GM13977 (cell line): ENCODE measurements at regions of chr6 and their contacts with region 1.

Region 1: DNA sequence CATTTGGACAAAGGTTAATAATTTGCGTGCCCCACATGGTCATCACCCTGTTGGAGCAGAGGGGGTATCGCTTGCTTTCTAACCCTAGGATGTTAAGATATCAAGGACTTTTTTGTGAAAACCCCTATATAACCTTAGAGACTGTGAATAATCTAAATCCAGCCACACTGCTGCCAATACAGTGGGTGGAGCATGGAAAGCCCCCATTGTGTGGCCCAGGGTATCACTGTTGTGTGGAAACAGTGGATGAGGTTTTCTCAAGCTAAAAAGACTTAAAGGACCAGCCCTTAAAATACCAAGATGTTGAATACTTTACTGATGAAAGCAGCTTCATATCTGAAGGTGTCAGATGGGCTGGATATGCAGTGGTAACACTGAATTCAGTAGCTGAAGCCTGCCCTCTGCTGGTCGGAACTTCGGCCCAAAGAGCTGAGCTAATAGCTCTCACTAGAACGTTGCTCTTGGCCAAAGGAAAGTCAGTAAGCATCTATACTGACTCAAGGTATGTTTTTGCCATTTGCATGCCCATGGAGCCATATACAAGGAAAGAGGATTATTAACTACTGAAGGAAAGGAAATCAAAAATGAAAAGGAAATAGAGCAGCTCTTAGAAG is 695.2 kb downstream of the PHF3 start:
- DNase-seq: no peak
- CTCF ChIP-seq: peak; percentile 85

Region 2: DNA sequence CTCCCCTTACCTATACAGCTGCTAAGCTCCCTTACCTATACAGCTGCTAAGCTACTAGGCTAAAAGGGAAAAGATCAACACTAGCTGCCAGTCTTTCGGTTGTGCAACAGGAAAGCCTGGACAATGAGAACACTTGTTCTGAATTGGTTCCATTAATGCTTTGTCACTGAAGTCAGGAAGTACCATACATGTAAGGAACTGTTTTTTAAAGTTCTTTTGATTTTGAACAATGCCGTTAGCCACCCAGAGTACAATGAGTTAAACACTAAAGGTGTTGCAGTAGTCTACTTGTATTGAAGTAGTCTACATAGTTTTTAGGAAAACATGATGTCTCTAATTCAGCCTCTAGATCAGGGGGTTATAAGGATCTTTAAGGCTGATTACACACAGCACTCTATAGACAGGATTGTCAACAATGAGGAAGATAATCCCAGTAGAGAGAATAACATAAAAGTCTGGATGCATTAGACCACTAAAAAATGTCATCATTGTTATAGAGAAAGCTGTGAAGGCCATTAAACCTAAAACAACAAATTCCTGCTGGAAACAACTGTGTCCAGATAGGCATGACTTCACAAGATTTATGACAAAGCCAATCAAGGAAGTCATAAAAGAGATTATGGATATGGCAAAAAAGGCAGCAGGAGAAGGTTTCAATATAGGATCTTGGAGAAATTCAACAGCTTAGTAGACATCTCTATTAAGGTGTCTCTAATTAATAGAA is 388.9 kb before region 1 on chr6:
- in situ Hi-C with region 1: loop called (anchors 25 kb)
- DNase-seq: no peak
- CTCF ChIP-seq: no peak